PC-9 (cell line): ENCODE measurements at regions of chr11 and their contacts with region 1.

Region 1: DNA sequence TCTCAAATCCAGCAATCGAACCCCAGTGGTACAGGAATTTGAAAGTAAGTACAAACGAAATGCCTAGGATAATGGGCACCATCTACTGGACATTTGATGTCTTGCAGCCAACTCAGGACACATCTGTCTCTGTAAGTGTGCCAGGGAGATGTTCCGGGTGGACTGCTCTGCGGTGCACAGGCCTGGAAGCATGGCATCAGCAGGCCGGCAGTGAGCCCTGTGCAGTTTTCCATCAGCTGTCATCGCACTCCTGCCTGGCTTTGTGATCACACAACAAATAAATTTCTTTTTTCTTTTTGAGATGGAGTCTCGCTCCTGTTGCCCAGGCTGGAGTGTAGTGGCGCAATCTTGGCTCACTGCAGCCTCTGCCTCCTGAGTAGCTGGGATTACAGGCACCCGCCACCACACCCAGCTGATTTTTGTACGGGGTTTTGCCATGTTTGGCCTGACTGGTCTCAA is 71.0 kb downstream of the JAM3 start:
- DNase-seq: peak in 1 of 2 experiments; percentile 19
- H3K4me3 ChIP-seq: no peak overlapping the region
- H3K27ac ChIP-seq: no peak overlapping the region
- H3K4me1 ChIP-seq: no peaks in the 10 kb centered on the region
- H3K27me3 ChIP-seq: peaks cover 77% of the 10 kb centered on the region
- CTCF ChIP-seq: peak; percentile 81

Region 2: DNA sequence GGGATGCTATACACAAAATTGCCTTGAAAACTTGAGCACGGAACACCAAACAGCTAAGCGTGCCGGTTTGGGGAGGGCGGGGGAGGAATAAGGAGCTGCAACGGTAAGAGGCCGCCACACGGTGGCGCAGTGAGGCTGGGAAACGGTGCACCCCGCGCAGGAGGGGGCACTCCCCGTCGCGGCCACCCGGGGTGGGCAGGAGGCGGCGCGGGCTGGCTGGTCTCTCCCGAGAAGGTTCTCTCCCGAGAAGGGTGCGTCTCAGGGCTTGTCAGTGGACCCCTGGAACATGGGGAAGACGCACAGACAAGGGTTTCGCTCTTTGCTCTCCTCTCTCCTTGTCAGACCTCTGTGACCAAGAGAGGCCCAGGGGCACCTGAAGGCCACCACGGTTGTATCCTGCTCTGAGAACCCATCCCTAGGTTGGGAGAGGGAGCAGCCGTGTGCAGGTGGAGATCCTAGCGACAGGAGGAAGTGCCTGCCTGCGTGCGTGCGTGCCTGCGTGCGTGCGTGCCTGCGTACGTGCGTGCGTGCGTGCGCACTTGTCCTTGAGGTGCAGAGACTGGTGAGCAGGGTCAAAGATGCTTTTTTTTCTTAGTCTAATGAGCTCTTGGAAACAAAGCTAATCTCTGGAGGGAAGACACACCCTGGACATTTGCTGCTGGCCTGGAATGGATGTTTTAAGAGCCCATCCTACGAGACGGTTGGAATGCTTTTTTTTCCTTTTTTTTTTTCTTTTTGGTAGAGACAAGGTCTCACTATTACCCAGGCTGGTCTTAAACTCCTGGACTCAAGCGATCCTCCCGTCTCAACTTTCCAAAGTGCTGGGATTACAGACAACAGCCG is 89.1 kb before region 1 on chr11:
- CTCF ChIA-PET with region 1: interaction called, 4 read pairs
- POLR2A ChIA-PET with region 1: no interaction called
- intact Hi-C with region 1: loop called (anchors 2 kb)
- DNase-seq: peak in 1 of 2 experiments; percentile 27
- H3K4me3 ChIP-seq: no peak overlapping the region
- H3K27ac ChIP-seq: no peak overlapping the region
- H3K4me1 ChIP-seq: no peaks in the 10 kb centered on the region
- H3K27me3 ChIP-seq: peaks cover 87% of the 10 kb centered on the region
- CTCF ChIP-seq: peak; percentile 89